Ovary (tissue), 10 donors: ENCODE measurements at regions of chr7 and their contacts with region 1.

Region 1: DNA sequence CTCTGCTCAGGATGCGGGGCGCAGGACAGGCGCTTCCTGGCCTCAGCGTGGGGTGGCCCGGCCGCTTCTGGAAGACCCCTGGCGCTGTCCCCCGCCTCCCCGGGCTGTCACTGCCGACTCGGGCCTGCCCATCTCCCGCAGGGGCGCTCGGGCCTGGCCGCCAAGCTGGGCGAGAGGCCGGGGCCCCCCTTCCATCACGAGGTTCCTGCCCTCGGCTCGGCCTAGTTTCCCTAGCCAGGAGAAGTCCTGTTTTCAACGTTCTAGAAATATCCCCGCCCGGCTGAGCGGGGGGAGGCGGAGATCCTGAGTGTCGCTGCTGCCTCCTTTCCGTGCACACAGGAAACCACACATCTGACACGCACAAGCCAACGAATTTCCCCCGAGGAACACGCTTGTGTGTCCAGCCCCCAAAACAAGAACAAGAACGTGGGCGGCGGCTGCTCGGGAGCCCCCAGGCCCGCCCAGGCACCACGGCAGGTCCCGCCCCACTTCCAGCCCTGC is 33.7 kb downstream of the AP5Z1 start:
- DNase-seq: no peak
- H3K4me3 ChIP-seq: no peak overlapping the region
- H3K27ac ChIP-seq: no peak overlapping the region
- H3K4me1 ChIP-seq: no peaks in the 10 kb centered on the region
- H3K27me3 ChIP-seq: no peaks in the 10 kb centered on the region
- CTCF ChIP-seq: no peak
- EP300 ChIP-seq: no peak
- POLR2A ChIP-seq: no peak

Region 2: GRCh38 chr7:4960363-4960762 is 151.2 kb after region 1 on chr7:
- intact Hi-C with region 1: loop called in 1 of 4 experiments (anchors 10 kb)
- DNase-seq: no peak
- H3K4me3 ChIP-seq: no peak overlapping the region
- H3K27ac ChIP-seq: no peak overlapping the region
- H3K4me1 ChIP-seq: no peaks in the 10 kb centered on the region
- H3K27me3 ChIP-seq: no peaks in the 10 kb centered on the region
- CTCF ChIP-seq: no peak
- EP300 ChIP-seq: no peak
- POLR2A ChIP-seq: no peak

Region 3: DNA sequence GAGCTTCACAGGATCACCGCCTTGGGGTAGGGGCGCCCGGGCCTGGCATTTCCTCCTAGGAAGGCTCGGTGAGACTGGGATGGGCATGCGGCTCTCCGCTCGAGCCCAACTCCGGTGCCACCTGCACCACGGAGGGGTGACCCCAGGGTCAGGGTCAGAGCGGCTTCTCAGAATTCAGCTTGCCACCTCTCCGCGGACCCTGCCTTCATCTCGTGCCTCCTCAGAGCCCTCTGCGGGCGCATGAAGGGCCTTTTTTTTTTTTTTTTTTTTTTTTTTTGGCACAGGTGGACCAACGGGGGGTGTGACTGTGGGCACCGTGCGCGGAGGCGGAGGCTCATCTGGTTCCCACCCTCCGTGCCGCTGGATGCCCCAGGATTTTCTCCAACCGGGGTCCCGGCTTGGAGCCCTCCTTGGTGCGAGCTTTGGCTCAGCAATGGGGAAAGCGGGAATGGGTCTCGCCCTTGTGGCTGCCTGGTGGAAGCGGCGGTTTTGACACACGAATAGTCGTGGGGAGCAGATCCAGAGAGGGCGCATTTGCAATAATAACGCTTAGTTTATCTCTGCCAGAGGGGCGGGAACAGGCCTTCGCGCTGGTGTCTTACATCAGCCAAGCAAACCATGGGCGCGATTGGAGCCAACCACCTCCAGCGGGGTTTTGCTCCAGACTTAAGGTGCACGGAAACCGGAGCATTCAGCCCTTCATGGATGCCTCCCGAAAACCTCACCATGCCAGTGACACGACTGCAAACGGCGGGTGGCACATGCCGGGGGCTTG is 619.5 kb after region 1 on chr7:
- intact Hi-C with region 1: no loop called
- DNase-seq: peak; percentile 67 to 79 (median 77)
- H3K4me3 ChIP-seq: peak overlapping the region; percentile 94
- H3K27ac ChIP-seq: peak overlapping the region; percentile 98 to 99
- H3K4me1 ChIP-seq: peaks cover 10% of the 10 kb centered on the region
- H3K27me3 ChIP-seq: no peaks in the 10 kb centered on the region
- CTCF ChIP-seq: no peak
- EP300 ChIP-seq: no peak
- POLR2A ChIP-seq: no peak

Region 4: GRCh38 chr7:5596046-5596895 is 787.1 kb after region 1 on chr7:
- intact Hi-C with region 1: no loop called
- DNase-seq: peak; percentile 90 to 92 (median 91)
- H3K4me3 ChIP-seq: peak overlapping the region; percentile 66
- H3K27ac ChIP-seq: peak overlapping the region; percentile 70 to 81
- H3K4me1 ChIP-seq: peaks cover 33% of the 10 kb centered on the region
- H3K27me3 ChIP-seq: no peaks in the 10 kb centered on the region
- CTCF ChIP-seq: no peak
- EP300 ChIP-seq: no peak
- POLR2A ChIP-seq: no peak